ENCODE measurements at regions of chr10 and their contacts with region 1.

Region 1: GRCh38 chr10:120942806-120943413 is 91.7 kb downstream of the WDR11 start:
- DNase-seq: peak; percentile 90 to 93 (median 90)
- H3K4me3 ChIP-seq: no peak overlapping the region
- H3K27ac ChIP-seq: no peak overlapping the region
- H3K4me1 ChIP-seq: no peaks in the 10 kb centered on the region
- H3K27me3 ChIP-seq: no peaks in the 10 kb centered on the region
- CTCF ChIP-seq: peak; percentile 88

Region 2: DNA sequence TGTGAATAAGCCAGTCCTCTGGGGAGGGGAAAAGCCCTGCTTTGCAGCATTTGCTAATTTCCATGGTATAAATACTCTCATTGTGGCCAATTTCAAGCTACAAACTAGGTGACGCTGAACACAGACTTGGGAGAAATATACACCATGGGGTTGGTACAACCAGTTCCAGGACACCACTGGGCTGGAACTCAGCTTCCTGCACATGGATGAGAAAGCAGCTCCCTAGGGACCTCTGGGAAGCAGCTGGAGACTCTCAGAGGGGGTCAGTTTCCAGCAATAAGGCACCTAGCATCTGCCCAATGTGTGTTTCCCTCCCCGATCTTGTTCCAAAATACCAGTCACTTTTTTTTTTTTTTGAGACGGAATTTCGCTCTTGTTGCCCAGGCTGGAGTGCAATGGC is 148.5 kb before region 1 on chr10:
- intact Hi-C with region 1: no loop called
- DNase-seq: no peak
- H3K4me3 ChIP-seq: no peak overlapping the region
- H3K27ac ChIP-seq: no peak overlapping the region
- H3K4me1 ChIP-seq: no peaks in the 10 kb centered on the region
- H3K27me3 ChIP-seq: no peaks in the 10 kb centered on the region
- CTCF ChIP-seq: no peak

Region 3: DNA sequence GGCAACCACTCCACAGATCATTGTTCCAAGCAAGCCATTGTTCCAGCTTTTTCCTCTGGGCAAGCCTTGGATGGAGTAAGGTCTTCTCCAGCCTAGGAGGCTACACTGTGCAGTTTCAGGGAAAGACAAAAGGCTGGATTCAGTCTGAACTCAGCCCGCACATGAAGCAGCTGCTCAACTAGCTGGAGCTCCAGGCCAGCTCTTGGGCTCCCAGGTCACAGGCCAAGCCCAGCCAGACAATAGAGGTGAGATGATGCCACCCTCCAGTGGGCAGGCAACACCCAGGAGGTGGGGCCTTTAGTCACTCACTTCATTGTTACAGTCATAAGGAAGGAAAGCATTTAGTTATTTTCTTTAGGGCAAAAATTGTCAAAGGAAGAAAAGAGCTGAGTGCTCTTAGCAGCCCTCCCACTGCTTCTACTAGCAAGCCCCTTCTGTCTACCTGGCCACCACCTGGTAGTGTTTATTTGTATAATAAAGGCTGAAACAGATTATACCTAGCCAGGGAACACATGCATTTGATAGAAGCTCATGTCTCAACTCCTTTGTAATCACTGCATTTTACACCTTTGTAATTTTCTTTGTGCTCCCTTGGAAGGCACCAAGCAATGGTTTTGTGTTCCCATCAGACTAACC is 161.7 kb after region 1 on chr10:
- intact Hi-C with region 1: no loop called
- DNase-seq: no peak
- H3K4me3 ChIP-seq: no peak overlapping the region
- H3K27ac ChIP-seq: no peak overlapping the region
- H3K4me1 ChIP-seq: no peaks in the 10 kb centered on the region
- H3K27me3 ChIP-seq: no peaks in the 10 kb centered on the region
- CTCF ChIP-seq: no peak

Region 4: DNA sequence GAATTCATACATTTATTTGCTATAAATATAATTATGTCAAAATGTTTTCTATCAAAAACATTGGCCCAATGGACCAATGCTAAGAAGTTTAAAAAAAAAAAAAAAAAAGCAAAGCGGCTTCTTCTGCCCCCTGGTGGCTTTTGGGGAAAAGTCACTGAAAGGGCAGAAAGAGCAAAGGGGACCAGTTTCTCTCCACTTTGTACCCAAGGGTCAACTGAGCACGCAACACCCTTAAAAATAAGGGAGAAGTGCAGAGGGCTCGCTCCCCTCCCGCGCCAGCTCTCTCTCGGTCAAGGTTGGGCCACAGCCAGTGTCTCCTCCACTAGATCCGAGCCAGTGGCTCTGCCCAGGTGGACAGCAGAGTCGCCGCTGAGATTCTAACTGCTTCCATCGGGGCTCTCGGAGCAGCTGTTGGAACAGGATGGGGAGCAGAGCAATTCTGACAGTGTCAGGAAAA is 791.7 kb after region 1 on chr10:
- intact Hi-C with region 1: loop called (anchors 10 kb)
- DNase-seq: peak in 2 of 5 donors; percentile 29 to 63
- H3K4me3 ChIP-seq: no peak overlapping the region
- H3K27ac ChIP-seq: no peak overlapping the region
- H3K4me1 ChIP-seq: no peaks in the 10 kb centered on the region
- H3K27me3 ChIP-seq: no peaks in the 10 kb centered on the region
- CTCF ChIP-seq: peak; percentile 61

Region 5: DNA sequence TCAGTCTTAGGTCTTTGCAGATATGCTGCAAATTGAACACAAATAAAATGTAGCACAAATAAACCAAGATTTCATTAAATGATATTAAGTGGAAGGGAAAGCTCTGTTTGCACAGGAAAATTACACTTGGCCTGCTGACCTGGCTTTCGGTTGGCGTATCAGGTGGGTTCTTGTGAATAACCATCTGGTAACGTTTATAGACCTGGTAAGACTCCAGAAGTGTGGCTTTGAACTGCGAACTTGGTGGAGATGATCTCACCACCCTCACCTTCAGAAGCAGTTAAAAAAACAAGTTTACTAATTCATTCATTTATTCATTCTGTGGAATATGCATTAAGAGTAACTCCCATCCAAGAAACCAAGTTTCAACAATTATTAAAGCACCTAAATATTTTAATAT is 956.8 kb after region 1 on chr10:
- intact Hi-C with region 1: loop called (anchors 10 kb)
- DNase-seq: peak in 1 of 5 donors; percentile 7
- H3K4me3 ChIP-seq: no peak overlapping the region
- H3K27ac ChIP-seq: no peak overlapping the region
- H3K4me1 ChIP-seq: no peaks in the 10 kb centered on the region
- H3K27me3 ChIP-seq: no peaks in the 10 kb centered on the region
- CTCF ChIP-seq: no peak

Measured in kidney (tissue), 22 donors.